SK-N-SH (cell line): ENCODE measurements at regions of chr15 and their contacts with region 1.

Region 1: DNA sequence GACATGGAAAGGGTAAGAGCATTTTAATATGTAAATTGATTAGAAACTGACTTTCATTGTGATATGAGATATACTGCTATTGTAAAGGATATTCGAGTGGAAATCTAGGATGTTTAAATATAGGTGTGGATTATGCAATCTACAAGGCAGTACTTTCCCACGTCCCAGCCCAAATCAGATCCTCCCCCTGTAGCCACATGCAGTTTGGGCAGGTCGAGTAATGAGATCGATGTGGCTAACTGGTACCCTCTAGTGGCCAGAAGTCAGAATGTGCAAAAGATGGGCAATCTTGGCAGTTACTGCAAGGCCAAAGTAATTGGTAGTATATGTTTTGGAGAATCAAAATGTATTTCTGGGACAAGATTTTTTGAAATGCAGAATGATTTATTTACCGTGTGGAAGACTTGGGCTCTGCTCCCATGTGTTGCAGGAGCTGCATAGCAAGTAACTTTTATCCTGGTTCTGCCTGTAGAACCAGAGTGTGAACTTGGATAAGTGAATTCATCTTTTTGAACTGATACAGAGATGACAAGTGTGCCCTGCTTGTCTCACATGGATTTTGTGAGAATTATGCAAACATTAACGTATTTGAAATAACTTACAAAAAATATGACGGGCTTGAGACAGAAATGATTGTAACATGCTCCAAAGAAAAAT is 94.5 kb upstream of the ADAMTSL3 start:
- DNase-seq: peak; percentile 66
- H3K4me3 ChIP-seq: no peak overlapping the region
- H3K27ac ChIP-seq: no peak overlapping the region
- H3K4me1 ChIP-seq: no peaks in the 10 kb centered on the region
- H3K27me3 ChIP-seq: peaks cover 14% of the 10 kb centered on the region; the same call in 1 of the 2 replicates
- CTCF ChIP-seq: peak; percentile 86
- EP300 ChIP-seq: no peak
- RAD21 ChIP-seq: peak; percentile 82

Region 2: GRCh38 chr15:83436458-83437158 is 122.8 kb before region 1 on chr15:
- CTCF ChIA-PET with region 1: interaction called, 63 read pairs
- POLR2A ChIA-PET with region 1: no interaction called
- DNase-seq: peak; percentile 42
- H3K4me3 ChIP-seq: no peak overlapping the region
- H3K27ac ChIP-seq: no peak overlapping the region
- H3K4me1 ChIP-seq: no peaks in the 10 kb centered on the region
- H3K27me3 ChIP-seq: no peaks in the 10 kb centered on the region; the same call in 1 of the 2 replicates
- CTCF ChIP-seq: peak; percentile 59
- EP300 ChIP-seq: no peak
- RAD21 ChIP-seq: peak; percentile 52

Region 3: GRCh38 chr15:83571820-83572707 is 12.6 kb after region 1 on chr15:
- CTCF ChIA-PET with region 1: interaction called, 37 read pairs
- POLR2A ChIA-PET with region 1: no interaction called
- DNase-seq: peak; percentile 32
- H3K4me3 ChIP-seq: no peak overlapping the region
- H3K27ac ChIP-seq: no peak overlapping the region
- H3K4me1 ChIP-seq: no peaks in the 10 kb centered on the region
- H3K27me3 ChIP-seq: no peaks in the 10 kb centered on the region; the same call in 1 of the 2 replicates
- CTCF ChIP-seq: peak; percentile 69
- EP300 ChIP-seq: no peak
- RAD21 ChIP-seq: peak; percentile 53

Region 4: GRCh38 chr15:83685916-83686332 is 126.5 kb after region 1 on chr15:
- CTCF ChIA-PET with region 1: no interaction called
- POLR2A ChIA-PET with region 1: no interaction called
- DNase-seq: no peak
- H3K4me3 ChIP-seq: no peak overlapping the region
- H3K27ac ChIP-seq: no peak overlapping the region
- H3K4me1 ChIP-seq: no peaks in the 10 kb centered on the region
- H3K27me3 ChIP-seq: no peaks in the 10 kb centered on the region; the same call in 1 of the 2 replicates
- CTCF ChIP-seq: no peak
- EP300 ChIP-seq: no peak
- RAD21 ChIP-seq: no peak

Region 5: GRCh38 chr15:83869341-83869740 is 309.9 kb after region 1 on chr15:
- CTCF ChIA-PET with region 1: no interaction called
- POLR2A ChIA-PET with region 1: no interaction called
- DNase-seq: no peak
- H3K4me3 ChIP-seq: no peak overlapping the region
- H3K27ac ChIP-seq: no peak overlapping the region
- H3K4me1 ChIP-seq: no peaks in the 10 kb centered on the region
- H3K27me3 ChIP-seq: no peaks in the 10 kb centered on the region; the same call in 1 of the 2 replicates
- CTCF ChIP-seq: no peak
- EP300 ChIP-seq: no peak
- RAD21 ChIP-seq: no peak